ENCODE measurements at regions of chr22 and their contacts with region 1.

Region 1: GRCh38 chr22:21916309-21916918 is 36.2 kb downstream of the PPM1F start:
- DNase-seq: no peak
- ATAC-seq: no peak
- H3K4me3 Mint-ChIP-seq: no peak overlapping the region
- H3K27ac Mint-ChIP-seq: no peak overlapping the region
- H3K4me1 Mint-ChIP-seq: no peaks in the 10 kb centered on the region
- H3K27me3 Mint-ChIP-seq: no peaks in the 10 kb centered on the region
- CTCF ChIP-seq: no peak

Region 2: GRCh38 chr22:21816787-21817496 is 99.5 kb before region 1 on chr22:
- CTCF ChIA-PET with region 1: no interaction called
- POLR2A ChIA-PET with region 1: no interaction called
- intact Hi-C with region 1: no loop called
- DNase-seq: peak; percentile 34
- ATAC-seq: peak; percentile 89
- H3K4me3 Mint-ChIP-seq: peak overlapping the region; percentile 81
- H3K27ac Mint-ChIP-seq: peak overlapping the region; percentile 96
- H3K4me1 Mint-ChIP-seq: peaks cover 80% of the 10 kb centered on the region
- H3K27me3 Mint-ChIP-seq: no peaks in the 10 kb centered on the region
- CTCF ChIP-seq: no peak

Region 3: GRCh38 chr22:21902296-21903087 is 13.9 kb before region 1 on chr22:
- CTCF ChIA-PET with region 1: no interaction called
- POLR2A ChIA-PET with region 1: interaction called, 10 read pairs
- intact Hi-C with region 1: no loop called
- DNase-seq: no peak
- ATAC-seq: no peak
- H3K4me3 Mint-ChIP-seq: no peak overlapping the region
- H3K27ac Mint-ChIP-seq: no peak overlapping the region
- H3K4me1 Mint-ChIP-seq: no peaks in the 10 kb centered on the region
- H3K27me3 Mint-ChIP-seq: no peaks in the 10 kb centered on the region
- CTCF ChIP-seq: no peak

Measured in activated B cell treated with CpG ODN at 0.5 μM for 24 hours (primary cell).